ENCODE measurements at regions of chr9 and their contacts with region 1.

Region 1: GRCh38 chr9:6757456-6758247 is at the start of gene KDM4C:
- DNase-seq: peak; percentile 99
- ATAC-seq: peak; percentile 78
- H3K4me3 ChIP-seq: peak within 1 kb of the TSS; percentile 74 to 98 (median 96)
- H3K4me3 Mint-ChIP-seq: peak within 1 kb of the TSS; percentile 100
- H3K27ac ChIP-seq: peak within 1 kb of the TSS; percentile 94 to 100
- H3K27ac Mint-ChIP-seq: peak within 1 kb of the TSS; percentile 100
- H3K4me1 ChIP-seq: peaks cover 29 to 35% of the 10 kb centered on the region in 2 donors
- H3K4me1 Mint-ChIP-seq: peaks cover 32% of the 10 kb centered on the region
- H3K27me3 ChIP-seq: no peaks in the 10 kb centered on the region
- H3K27me3 Mint-ChIP-seq: no peaks in the 10 kb centered on the region
- CTCF ChIP-seq: no peak
- total RNA-seq, gene KDM4C: 141 and 155 TPM in 2 replicates

Region 2: GRCh38 chr9:6412487-6413364 is 344.9 kb before region 1 on chr9 and contains the start of gene UHRF2:
- CTCF ChIA-PET with region 1: no interaction called
- POLR2A ChIA-PET with region 1: interaction called, 40 read pairs
- intact Hi-C with region 1: loop called (anchors 1 kb)
- DNase-seq: peak; percentile 100
- ATAC-seq: peak; percentile 87
- H3K4me3 ChIP-seq: peak within 1 kb of the TSS; percentile 72 to 89 (median 87)
- H3K4me3 Mint-ChIP-seq: peak within 1 kb of the TSS; percentile 88
- H3K27ac ChIP-seq: peak within 1 kb of the TSS; percentile 95 to 97
- H3K27ac Mint-ChIP-seq: peak within 1 kb of the TSS; percentile 98
- H3K4me1 ChIP-seq: peaks cover 61 to 62% of the 10 kb centered on the region in 2 donors
- H3K4me1 Mint-ChIP-seq: peaks cover 58% of the 10 kb centered on the region
- H3K27me3 ChIP-seq: no peaks in the 10 kb centered on the region
- H3K27me3 Mint-ChIP-seq: no peaks in the 10 kb centered on the region
- CTCF ChIP-seq: no peak
- total RNA-seq, gene UHRF2: 153 and 171 TPM in 2 replicates

Region 3: DNA sequence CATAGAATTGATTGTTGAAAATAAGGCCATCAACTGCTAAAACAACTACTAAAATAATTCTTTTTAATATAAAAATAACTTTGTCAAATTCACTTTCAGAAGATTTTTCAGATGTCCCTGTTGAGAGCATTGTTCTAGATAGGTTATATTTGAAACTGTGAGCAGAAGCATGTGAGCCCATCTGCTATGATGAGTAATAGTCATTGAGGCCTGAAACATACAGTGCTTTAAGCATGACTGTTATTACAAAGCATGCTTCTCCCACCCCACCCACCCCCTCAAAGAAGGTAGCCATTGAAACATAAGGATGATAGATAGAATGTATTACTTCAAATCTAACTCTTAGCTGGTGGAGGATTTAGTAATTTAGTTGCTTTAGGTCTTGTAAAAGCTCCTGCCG is 258.7 kb before region 1 on chr9:
- CTCF ChIA-PET with region 1: no interaction called
- POLR2A ChIA-PET with region 1: no interaction called
- intact Hi-C with region 1: no loop called
- DNase-seq: no peak
- ATAC-seq: no peak
- H3K4me3 ChIP-seq: no peak overlapping the region
- H3K4me3 Mint-ChIP-seq: no peak overlapping the region
- H3K27ac ChIP-seq: no peak overlapping the region
- H3K27ac Mint-ChIP-seq: no peak overlapping the region
- H3K4me1 ChIP-seq: no peaks in the 10 kb centered on the region
- H3K4me1 Mint-ChIP-seq: no peaks in the 10 kb centered on the region
- H3K27me3 ChIP-seq: no peaks in the 10 kb centered on the region
- H3K27me3 Mint-ChIP-seq: no peaks in the 10 kb centered on the region
- CTCF ChIP-seq: no peak

Region 4: DNA sequence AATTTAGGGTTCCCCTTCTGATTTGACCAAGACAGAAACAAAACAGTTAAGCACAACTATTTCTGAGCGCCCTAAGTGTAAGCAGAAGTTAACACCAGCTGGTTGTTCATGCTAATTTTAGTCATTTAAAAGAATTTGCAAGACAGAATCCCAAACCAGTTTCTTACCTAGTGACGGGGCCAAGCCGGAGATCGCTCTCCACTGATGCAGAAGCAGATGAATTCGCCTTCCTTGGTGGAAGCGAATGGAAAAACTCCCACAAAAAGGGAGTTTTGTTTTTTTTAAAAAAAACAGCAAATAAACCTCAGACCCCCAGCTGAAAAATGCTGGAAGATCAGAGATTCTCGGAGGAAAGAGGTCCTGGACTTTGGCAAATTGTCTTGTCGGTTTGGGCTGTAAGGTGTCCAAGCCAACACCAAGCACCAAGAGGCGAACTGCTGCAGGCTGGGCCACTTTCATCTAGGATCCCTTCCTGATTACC is 64.7 kb before region 1 on chr9:
- CTCF ChIA-PET with region 1: interaction called, 5 read pairs
- POLR2A ChIA-PET with region 1: interaction called, 18 read pairs
- intact Hi-C with region 1: no loop called
- DNase-seq: peak; percentile 55
- ATAC-seq: peak; percentile 28
- H3K4me3 ChIP-seq: peak overlapping the region in 4 of 5 experiments; percentile 14 to 62 (median 28)
- H3K4me3 Mint-ChIP-seq: peak overlapping the region; percentile 87
- H3K27ac ChIP-seq: peak overlapping the region; percentile 79 to 95
- H3K27ac Mint-ChIP-seq: peak overlapping the region; percentile 97
- H3K4me1 ChIP-seq: peaks cover 76 to 83% of the 10 kb centered on the region in 2 donors
- H3K4me1 Mint-ChIP-seq: peaks cover 65% of the 10 kb centered on the region
- H3K27me3 ChIP-seq: no peaks in the 10 kb centered on the region
- H3K27me3 Mint-ChIP-seq: no peaks in the 10 kb centered on the region
- CTCF ChIP-seq: no peak

Region 5: DNA sequence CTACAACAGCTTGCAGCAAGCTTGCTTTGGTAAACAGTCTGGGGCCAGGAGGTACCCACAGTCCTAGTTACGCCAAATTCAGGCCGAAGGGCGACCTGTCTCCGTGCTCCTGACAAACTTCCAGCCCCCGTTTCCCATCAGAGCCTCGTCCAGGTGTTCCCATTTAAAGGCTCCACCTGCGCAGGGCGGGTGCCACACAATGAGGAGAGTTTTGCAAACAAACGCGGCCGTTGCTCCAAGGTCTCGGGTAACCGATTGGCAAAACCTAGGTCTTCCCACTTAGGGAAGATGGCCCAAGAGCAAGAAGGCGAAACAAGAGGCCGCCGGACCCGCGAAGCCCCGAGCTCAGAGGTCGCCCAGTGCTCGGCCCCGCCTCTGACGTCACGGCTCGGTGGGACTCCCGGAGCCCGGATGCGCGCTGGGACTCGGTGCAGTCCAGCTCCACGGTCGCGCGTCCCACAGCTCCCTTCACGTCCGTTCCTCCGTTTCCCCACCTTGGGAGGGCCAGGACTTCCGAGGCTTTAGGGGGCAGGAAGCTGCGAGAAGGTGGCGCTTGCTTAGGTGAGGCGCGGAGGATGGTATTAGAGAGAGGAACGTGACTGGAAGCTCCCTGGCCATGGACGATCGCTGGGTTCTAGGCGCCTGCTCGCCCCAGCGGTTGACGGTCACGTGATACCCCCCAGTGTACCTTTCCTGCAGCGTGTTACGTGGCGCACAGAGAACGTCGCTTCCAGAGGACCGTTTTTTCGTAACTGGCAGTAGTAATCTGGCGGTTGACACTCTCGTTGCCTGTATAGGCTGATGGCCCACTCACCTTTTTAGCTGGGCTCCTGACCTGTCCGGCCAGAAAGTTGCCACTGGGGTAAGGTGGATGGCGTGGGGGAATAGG is 41.7 kb before region 1 on chr9:
- CTCF ChIA-PET with region 1: interaction called, 4 read pairs
- POLR2A ChIA-PET with region 1: interaction called, 30 read pairs
- intact Hi-C with region 1: loop called (anchors 1 kb)
- DNase-seq: peak; percentile 81
- ATAC-seq: peak; percentile 85
- H3K4me3 ChIP-seq: peak overlapping the region; percentile 13 to 77 (median 60)
- H3K4me3 Mint-ChIP-seq: peak overlapping the region; percentile 90
- H3K27ac ChIP-seq: peak overlapping the region; percentile 58 to 76
- H3K27ac Mint-ChIP-seq: peak overlapping the region; percentile 91
- H3K4me1 ChIP-seq: peaks cover 6 to 16% of the 10 kb centered on the region in 2 donors
- H3K4me1 Mint-ChIP-seq: peaks cover 17% of the 10 kb centered on the region
- H3K27me3 ChIP-seq: no peaks in the 10 kb centered on the region
- H3K27me3 Mint-ChIP-seq: no peaks in the 10 kb centered on the region
- CTCF ChIP-seq: no peak

Region 6: DNA sequence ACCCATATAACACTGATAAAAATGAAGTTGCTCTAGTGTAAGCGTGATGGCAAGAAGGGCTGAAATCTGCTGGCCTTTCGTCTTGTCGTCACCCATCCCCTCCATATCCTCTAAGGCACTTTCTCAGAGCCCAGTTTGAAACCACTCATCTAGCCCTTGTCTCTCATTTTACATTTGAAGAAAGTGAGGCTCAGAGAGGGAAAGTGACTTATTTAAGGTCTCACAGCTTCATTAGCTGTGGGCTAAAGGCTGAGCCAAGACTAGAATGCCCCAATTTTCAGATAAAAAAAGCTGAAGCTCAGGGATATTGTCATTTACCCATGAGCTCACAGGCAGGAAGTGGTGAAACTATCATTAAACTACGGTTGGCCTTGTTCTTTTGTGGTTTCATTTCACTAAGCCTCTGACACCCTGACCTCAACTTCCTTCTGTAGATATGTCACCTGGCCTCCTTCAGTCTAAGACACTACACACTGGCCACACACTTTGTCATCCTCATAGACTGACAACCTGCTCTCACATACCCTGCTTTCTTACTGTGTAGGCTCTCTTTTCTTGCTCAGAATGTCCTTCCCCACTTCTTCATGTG is 1218.6 kb after region 1 on chr9:
- CTCF ChIA-PET with region 1: no interaction called
- POLR2A ChIA-PET with region 1: no interaction called
- intact Hi-C with region 1: loop called (anchors 10 kb)
- DNase-seq: peak; percentile 87
- ATAC-seq: peak; percentile 92
- H3K4me3 ChIP-seq: peak overlapping the region in 2 of 5 experiments; percentile 1 to 29
- H3K4me3 Mint-ChIP-seq: peak overlapping the region; percentile 74
- H3K27ac ChIP-seq: peak overlapping the region; percentile 81
- H3K27ac Mint-ChIP-seq: peak overlapping the region; percentile 91
- H3K4me1 ChIP-seq: peaks cover 57 to 65% of the 10 kb centered on the region in 2 donors
- H3K4me1 Mint-ChIP-seq: peaks cover 72% of the 10 kb centered on the region
- H3K27me3 ChIP-seq: no peaks in the 10 kb centered on the region
- H3K27me3 Mint-ChIP-seq: no peaks in the 10 kb centered on the region
- CTCF ChIP-seq: no peak

Measured in B cell (primary cell).